ENCODE measurements at regions of chr3 and their contacts with region 1.

Region 1: DNA sequence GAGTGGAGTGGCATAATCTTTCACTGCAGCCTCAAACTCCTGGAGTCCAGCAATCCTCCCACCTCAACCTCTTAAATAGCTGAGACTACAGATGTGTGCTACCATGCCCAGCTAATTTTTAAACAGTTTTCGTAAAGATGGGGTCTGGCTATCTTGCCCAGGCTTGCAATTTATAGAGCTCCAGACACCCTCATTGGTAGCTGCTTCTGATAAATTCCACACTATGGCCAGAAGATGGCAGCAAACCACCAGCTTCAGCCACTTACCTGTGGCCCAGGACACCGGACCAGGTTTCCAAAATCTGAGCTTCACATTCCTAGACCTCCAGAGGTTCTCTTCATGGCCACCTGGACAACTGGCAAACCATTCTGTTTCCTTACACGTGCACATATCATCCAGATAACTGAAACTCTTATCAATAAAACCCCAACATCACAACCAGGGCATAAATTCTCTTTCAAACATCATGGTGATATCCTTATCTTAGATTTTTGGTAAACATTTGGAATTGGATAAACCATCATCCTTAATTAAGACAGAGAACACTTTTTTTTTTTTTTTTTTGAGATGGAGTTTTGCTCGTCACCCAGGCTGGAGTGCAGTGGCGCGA is 28.9 kb downstream of the FBXW12 start:
- DNase-seq: peak; percentile 35 to 89 (median 56)
- ATAC-seq: peak; percentile 75 to 84 (median 82)
- H3K4me3 ChIP-seq: no peak overlapping the region
- H3K4me3 Mint-ChIP-seq: no peak overlapping the region
- H3K27ac ChIP-seq: no peak overlapping the region
- H3K27ac Mint-ChIP-seq: no peak overlapping the region
- H3K4me1 ChIP-seq: no peaks in the 10 kb centered on the region
- H3K4me1 Mint-ChIP-seq: no peaks in the 10 kb centered on the region
- H3K27me3 ChIP-seq: peaks cover 0 to 15% of the 10 kb centered on the region in 2 experiments
- H3K27me3 Mint-ChIP-seq: peaks cover 3 to 5% of the 10 kb centered on the region in 2 donors

Region 2: DNA sequence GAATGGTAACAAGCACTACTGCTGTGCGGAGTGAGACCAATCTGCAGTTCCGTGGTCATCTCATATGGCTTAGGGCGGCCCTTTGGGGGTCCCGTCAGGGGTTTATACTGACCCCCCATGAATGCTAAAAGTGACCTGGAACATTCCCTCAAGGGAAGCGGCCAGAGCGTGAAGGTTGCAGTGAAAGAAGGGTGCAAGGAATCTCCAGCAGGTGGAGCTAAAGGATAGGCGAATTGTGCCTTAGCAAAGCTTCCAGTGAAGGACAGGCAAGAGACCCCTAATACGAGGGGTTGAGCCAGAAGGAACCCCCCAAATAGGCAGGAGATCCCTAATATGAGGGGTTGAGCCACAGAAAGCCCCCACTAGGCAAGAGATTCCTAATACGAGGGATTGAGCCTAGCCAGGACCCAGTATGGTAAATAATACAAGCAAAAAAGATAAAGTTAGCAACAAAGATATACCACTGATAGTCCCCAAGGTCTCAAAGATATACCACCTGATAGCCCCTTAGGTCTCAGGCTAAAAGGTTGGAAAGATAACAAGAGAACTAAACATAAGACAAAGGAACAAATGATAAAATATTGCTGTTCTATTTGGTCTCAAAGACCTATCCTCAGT is 127.2 kb before region 1 on chr3:
- CTCF ChIA-PET with region 1: interaction called in 1 of 2 experiments, 11 read pairs
- POLR2A ChIA-PET with region 1: no interaction called
- DNase-seq: peak in 30 of 35 experiments; percentile 8 to 80 (median 40)
- ATAC-seq: peak in 1 of 4 experiments; percentile 28
- H3K4me3 ChIP-seq: no peak overlapping the region
- H3K4me3 Mint-ChIP-seq: no peak overlapping the region
- H3K27ac ChIP-seq: no peak overlapping the region
- H3K27ac Mint-ChIP-seq: no peak overlapping the region
- H3K4me1 ChIP-seq: peaks cover 10 to 13% of the 10 kb centered on the region in 2 experiments
- H3K4me1 Mint-ChIP-seq: peaks cover 18 to 25% (median 19%) of the 10 kb centered on the region in 3 donors
- H3K27me3 ChIP-seq: no peaks in the 10 kb centered on the region
- H3K27me3 Mint-ChIP-seq: no peaks in the 10 kb centered on the region

Region 3: GRCh38 chr3:48548729-48549705 is 148.1 kb after region 1 on chr3:
- CTCF ChIA-PET with region 1: interaction called, 8 to 51 read pairs
- POLR2A ChIA-PET with region 1: no interaction called
- DNase-seq: peak; percentile 46 to 87 (median 78)
- ATAC-seq: peak; percentile 89 to 99 (median 96)
- H3K4me3 ChIP-seq: no peak overlapping the region
- H3K4me3 Mint-ChIP-seq: no peak overlapping the region
- H3K27ac ChIP-seq: no peak overlapping the region
- H3K27ac Mint-ChIP-seq: no peak overlapping the region
- H3K4me1 ChIP-seq: peaks cover 0 to 7% of the 10 kb centered on the region in 2 experiments
- H3K4me1 Mint-ChIP-seq: peaks cover 9 to 27% (median 19%) of the 10 kb centered on the region in 3 donors
- H3K27me3 ChIP-seq: no peaks in the 10 kb centered on the region
- H3K27me3 Mint-ChIP-seq: no peaks in the 10 kb centered on the region

Region 4: DNA sequence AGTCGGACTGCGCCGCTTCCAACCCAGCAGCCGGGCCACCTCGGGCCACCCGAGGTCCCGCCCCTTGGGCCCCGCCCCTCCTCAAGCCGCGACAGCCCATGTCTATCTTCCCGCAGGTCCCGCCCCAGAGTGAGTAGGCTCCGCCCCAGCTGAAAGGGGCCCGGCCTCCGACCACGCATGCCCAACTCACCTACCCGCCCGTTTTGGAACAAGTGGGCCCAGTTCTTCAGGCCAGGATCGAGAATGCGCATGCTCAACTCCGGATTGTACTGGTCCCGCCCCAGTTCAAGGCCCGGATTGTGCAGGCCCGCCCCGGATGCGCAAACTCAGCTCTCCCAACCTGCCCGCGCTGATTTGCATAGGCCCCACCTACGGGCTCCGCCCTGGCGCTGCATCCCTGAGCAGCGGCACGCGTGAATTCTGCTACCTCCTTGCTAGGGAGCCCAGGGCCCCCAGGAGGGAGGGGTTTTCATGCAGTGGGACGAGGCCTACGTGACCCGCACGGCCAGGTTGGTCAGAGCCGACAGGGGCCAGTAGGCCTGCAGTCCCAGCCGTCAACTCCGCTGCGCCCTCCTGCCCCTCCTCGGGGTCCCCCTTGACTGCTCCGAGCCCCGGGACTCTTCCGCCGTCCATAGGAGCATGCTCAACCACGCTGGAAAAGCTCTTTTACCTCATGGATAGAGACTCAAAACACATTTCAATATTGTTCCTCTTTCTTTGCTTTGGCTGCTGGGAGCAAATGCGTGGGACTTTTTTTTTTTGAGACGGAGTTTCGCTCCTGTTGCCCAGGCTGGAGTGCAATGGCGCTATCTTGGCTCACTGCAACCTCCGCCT is 156.1 kb after region 1 on chr3 and contains the start of gene PFKFB4:
- CTCF ChIA-PET with region 1: interaction called, 4 to 25 read pairs
- POLR2A ChIA-PET with region 1: no interaction called
- DNase-seq: peak; percentile 98 to 100 (median 99)
- ATAC-seq: peak; percentile 90 to 91 (median 90)
- H3K4me3 ChIP-seq: peak within 1 kb of the TSS; percentile 65 to 79
- H3K4me3 Mint-ChIP-seq: peak within 1 kb of the TSS; percentile 76 to 85 (median 82)
- H3K27ac ChIP-seq: no peak within 1 kb of the TSS
- H3K27ac Mint-ChIP-seq: peak within 1 kb of the TSS; percentile 79 to 86
- H3K4me1 ChIP-seq: peaks cover 0 to 31% of the 10 kb centered on the region in 2 experiments
- H3K4me1 Mint-ChIP-seq: peaks cover 18 to 24% (median 21%) of the 10 kb centered on the region in 3 donors
- H3K27me3 ChIP-seq: peaks cover 0 to 9% of the 10 kb centered on the region in 2 experiments
- H3K27me3 Mint-ChIP-seq: no peaks in the 10 kb centered on the region
- total RNA-seq, gene PFKFB4: 1.8 to 4.2 (median 2.4) TPM

Measured in T-cell (primary cell).